H1 (cell line): ENCODE measurements at regions of chr2 and their contacts with region 1.

Region 1: GRCh38 chr2:20291106-20291564 is 59.5 kb downstream of the PUM2 start:
- DNase-seq: peak; percentile 43 to 52
- H3K4me3 ChIP-seq: no peak overlapping the region
- H3K27ac ChIP-seq: no peak overlapping the region
- H3K4me1 ChIP-seq: peaks cover 0 to 6% (median 1%) of the 10 kb centered on the region in 4 experiments; a peak in 2 of 7 replicates
- H3K27me3 ChIP-seq: no peaks in the 10 kb centered on the region
- CTCF ChIP-seq: peak; percentile 54 to 96 (median 88)
- EP300 ChIP-seq: no peak
- POLR2A ChIP-seq: no peak
- RAD21 ChIP-seq: peak; percentile 49 to 50

Region 2: DNA sequence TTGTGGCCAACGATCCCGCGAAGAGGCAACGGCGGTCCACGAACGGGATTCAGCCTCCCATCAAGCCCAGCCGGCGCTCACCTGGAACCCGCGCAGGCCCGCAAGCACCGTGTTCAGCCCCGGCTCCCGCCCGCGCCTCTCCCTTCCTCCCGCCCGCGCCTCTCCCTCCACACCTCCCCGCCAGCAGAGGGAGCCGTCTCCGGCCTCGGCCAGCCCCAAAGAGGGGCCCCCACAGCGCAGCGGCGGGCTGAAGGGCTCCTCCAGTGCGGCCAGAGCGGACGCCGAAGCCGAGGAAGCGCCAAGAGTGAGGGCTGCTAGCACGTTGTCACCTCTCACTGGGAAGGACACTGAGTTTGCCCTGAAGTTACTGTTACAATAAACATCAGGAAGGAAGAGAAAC is 184.4 kb before region 1 on chr2:
- CTCF ChIA-PET with region 1: interaction called, 21 read pairs
- POLR2A ChIA-PET with region 1: no interaction called
- DNase-seq: peak; percentile 21 to 94
- H3K4me3 ChIP-seq: peak overlapping the region in 3 of 4 experiments; percentile 27 to 48 (median 29); a peak in 5 of 8 replicates
- H3K27ac ChIP-seq: no peak overlapping the region
- H3K4me1 ChIP-seq: peaks cover 0 to 2% (median 0%) of the 10 kb centered on the region in 4 experiments; a peak in 1 of 7 replicates
- H3K27me3 ChIP-seq: peaks cover 0 to 5% (median 3%) of the 10 kb centered on the region in 4 experiments; a peak in 3 of 7 replicates
- CTCF ChIP-seq: peak; percentile 72 to 83 (median 73)
- EP300 ChIP-seq: no peak
- POLR2A ChIP-seq: no peak
- RAD21 ChIP-seq: peak; percentile 65 to 77

Region 3: DNA sequence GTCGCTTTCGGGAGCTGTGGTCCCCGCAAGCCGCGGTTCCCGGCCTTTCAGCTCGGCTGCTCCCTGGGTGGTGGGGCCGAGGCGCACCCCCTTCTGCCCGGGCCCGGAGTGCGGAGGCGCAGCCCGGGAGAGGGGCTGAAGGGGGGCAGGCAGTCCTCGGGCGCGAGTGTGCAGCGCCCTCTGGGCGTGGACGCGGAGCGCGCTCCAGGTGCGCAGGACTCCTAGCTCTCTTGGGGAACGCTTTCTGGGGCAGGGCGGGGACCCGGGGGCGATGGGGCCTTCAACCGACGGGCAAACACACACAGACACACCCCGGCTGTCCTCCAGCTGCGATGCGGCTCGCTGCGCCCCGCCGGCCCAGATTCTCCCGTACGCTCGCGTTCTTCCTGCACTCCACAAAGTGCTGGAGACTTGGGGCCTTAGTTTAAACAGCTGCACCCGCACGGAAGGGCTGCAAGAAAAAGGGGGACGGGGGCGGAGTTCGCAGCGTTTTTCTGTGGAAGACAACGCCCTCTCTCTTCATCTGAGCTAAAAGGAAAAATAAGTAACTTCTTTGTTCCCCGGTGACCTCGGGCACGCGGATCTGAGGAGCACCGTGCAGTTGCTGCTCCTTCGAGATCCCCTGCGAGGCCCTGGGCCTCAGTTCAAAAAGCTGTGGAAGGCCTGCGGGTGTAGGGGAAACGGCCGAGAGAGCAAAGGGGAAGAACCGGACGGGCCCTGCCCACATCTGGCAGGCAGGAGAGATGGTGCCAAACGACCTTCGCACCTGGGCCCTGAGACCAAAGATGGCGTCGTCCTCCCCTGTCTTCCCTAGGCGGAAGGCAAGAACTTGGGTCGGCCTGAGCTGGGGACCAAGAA is 65.6 kb before region 1 on chr2:
- CTCF ChIA-PET with region 1: interaction called, 11 read pairs
- POLR2A ChIA-PET with region 1: interaction called, 3 read pairs
- DNase-seq: peak; percentile 51 to 87
- H3K4me3 ChIP-seq: peak overlapping the region; percentile 49 to 94 (median 64)
- H3K27ac ChIP-seq: peak overlapping the region; percentile 46; the same call in 1 of the 2 replicates
- H3K4me1 ChIP-seq: peaks cover 4 to 22% (median 15%) of the 10 kb centered on the region in 4 experiments
- H3K27me3 ChIP-seq: peaks cover 0 to 7% (median 4%) of the 10 kb centered on the region in 4 experiments; a peak in 4 of 7 replicates
- CTCF ChIP-seq: peak in 2 of 3 experiments; percentile 47 to 55; a peak in 3 of 4 replicates
- EP300 ChIP-seq: no peak
- POLR2A ChIP-seq: no peak; a peak in 2 of 3 replicates
- RAD21 ChIP-seq: peak; percentile 48 to 55

Region 4: GRCh38 chr2:20242060-20243006 is 48.8 kb before region 1 on chr2:
- CTCF ChIA-PET with region 1: interaction called, 24 read pairs
- POLR2A ChIA-PET with region 1: no interaction called
- DNase-seq: peak in 1 of 2 experiments; percentile 93
- H3K4me3 ChIP-seq: no peak overlapping the region
- H3K27ac ChIP-seq: 0 out of 2 replicates have a peak overlapping the region, but pooled peaks have one; percentile 3
- H3K4me1 ChIP-seq: peaks cover 0 to 8% (median 2%) of the 10 kb centered on the region in 4 experiments; a peak in 5 of 7 replicates
- H3K27me3 ChIP-seq: no peaks in the 10 kb centered on the region; a peak in 1 of 7 replicates
- CTCF ChIP-seq: peak; percentile 63 to 91 (median 86)
- EP300 ChIP-seq: no peak
- POLR2A ChIP-seq: no peak
- RAD21 ChIP-seq: peak; percentile 29 to 52

Region 5: GRCh38 chr2:20264629-20265028 is 26.5 kb before region 1 on chr2:
- CTCF ChIA-PET with region 1: interaction called, 10 read pairs
- POLR2A ChIA-PET with region 1: no interaction called
- DNase-seq: no peak
- H3K4me3 ChIP-seq: no peak overlapping the region
- H3K27ac ChIP-seq: no peak overlapping the region
- H3K4me1 ChIP-seq: no peaks in the 10 kb centered on the region
- H3K27me3 ChIP-seq: no peaks in the 10 kb centered on the region
- CTCF ChIP-seq: no peak
- EP300 ChIP-seq: no peak
- POLR2A ChIP-seq: no peak
- RAD21 ChIP-seq: no peak

Region 6: DNA sequence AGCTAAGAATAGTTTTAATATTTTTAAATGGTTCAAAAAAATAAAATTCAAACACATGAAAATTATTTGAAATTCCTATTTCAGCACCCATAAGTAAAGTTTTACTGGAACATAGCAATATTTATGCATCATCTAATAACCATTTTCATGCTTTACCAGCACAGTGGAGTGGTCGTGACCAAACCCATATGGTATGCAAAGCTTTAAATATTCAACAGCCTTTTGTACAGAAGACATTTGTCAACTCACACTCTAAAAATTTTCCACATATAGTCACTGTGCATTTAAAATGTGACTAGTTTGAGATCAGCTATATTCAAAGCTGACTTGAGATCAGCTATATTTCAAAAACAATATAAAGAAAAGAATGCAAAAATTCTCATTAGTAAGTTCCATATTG is 13.3 kb after region 1 on chr2:
- CTCF ChIA-PET with region 1: interaction called, 20 read pairs
- POLR2A ChIA-PET with region 1: interaction called, 3 read pairs
- DNase-seq: no peak
- H3K4me3 ChIP-seq: no peak overlapping the region
- H3K27ac ChIP-seq: no peak overlapping the region
- H3K4me1 ChIP-seq: no peaks in the 10 kb centered on the region
- H3K27me3 ChIP-seq: no peaks in the 10 kb centered on the region
- CTCF ChIP-seq: no peak
- EP300 ChIP-seq: no peak
- POLR2A ChIP-seq: no peak
- RAD21 ChIP-seq: no peak

Region 7: DNA sequence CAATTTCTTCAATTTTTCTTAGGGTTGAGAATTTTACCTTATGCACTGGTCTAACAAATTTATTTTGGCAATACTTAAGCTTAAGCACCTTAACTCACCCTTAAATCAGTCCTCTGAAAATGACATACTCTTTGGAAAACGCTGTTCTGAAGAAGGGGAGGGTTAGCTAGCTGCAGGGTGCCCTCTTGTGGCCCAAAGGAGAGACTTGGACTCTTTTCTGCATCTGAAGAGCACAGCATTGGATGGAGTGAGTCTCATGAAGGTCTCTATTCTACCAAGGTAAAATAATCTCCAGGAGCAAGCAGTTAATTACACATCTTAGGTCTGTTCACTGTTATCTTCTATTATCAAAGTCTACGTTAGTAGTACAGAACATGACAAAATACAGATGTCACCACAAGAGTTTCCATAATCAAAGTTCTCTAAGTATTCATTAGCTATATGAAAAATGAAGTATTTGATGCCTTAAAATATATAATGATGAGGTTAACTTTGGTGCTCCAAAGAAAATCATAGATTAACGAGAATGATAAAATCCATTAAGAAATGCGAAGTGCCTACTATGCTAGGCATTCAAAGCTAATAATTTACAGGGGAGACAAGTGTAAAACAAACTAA is 35.1 kb after region 1 on chr2:
- CTCF ChIA-PET with region 1: interaction called, 16 read pairs
- POLR2A ChIA-PET with region 1: no interaction called
- DNase-seq: no peak
- H3K4me3 ChIP-seq: no peak overlapping the region
- H3K27ac ChIP-seq: no peak overlapping the region
- H3K4me1 ChIP-seq: peaks cover 0 to 4% (median 1%) of the 10 kb centered on the region in 4 experiments; a peak in 2 of 7 replicates
- H3K27me3 ChIP-seq: no peaks in the 10 kb centered on the region
- CTCF ChIP-seq: peak; percentile 49 to 85 (median 65)
- EP300 ChIP-seq: no peak
- POLR2A ChIP-seq: no peak
- RAD21 ChIP-seq: peak; percentile 66 to 72